ENCODE measurements at regions of chr4 and their contacts with region 1.

Region 1: DNA sequence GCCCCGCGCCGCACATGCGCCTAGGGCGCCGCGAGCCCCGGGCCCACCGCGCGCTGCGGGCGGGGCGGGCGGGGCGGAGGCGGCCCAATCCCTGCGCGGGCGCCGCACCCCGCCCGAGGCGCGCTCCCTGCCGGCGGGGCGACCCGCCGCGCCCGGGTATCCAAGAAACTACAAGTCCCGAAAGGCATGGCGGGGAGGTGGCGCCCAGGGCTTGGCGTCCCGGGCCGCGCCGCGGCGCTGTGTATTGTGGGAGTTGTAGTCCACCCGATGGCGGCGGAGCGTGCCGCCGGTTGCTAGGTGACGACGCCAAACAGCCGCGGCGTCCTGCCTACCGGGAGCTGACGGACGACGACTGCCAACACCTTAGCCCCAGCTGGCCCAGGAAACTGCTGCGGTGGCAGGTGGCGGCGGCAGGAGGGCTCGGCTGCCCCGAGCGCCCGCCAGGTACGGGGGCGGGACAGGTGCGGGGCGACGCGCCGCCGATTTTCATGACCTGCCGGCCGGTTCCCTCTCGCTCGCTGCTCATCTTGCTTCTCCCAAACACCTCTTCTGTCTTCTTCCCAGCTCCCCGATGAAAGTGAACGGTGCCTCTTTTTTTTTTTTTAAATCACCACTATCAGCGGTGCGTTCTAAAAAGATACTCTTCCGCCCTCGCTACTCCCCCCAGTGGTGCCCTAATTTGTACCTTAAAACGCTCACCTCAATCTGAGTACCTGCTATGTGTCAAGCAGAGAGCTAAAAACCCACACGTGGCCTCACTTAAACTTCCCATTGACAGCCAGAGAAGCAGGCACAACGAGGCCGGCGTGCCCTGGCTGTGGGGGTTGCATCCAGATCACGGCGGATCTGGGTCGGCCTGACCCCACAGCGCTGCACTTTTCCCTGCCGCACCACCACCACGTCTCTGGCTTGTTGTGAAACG is at the start of gene CFAP99:
- DNase-seq: peak; percentile 92
- H3K4me3 ChIP-seq: peak within 1 kb of the TSS; percentile 41 to 52 (median 47)
- H3K27ac ChIP-seq: no peak within 1 kb of the TSS
- H3K4me1 ChIP-seq: peaks cover 22% of the 10 kb centered on the region
- H3K27me3 ChIP-seq: peaks cover 39% of the 10 kb centered on the region
- CTCF ChIP-seq: peak in 1 of 2 donors; percentile 15
- total RNA-seq, gene CFAP99: not detected

Region 2: GRCh38 chr4:2792711-2793585 is 374.0 kb after region 1 on chr4 and contains the start of gene SH3BP2:
- CTCF ChIA-PET with region 1: interaction called, 15 read pairs
- dilution Hi-C with region 1: no loop called
- in situ Hi-C with region 1: no loop called
- intact Hi-C with region 1: no loop called
- DNase-seq: peak; percentile 21
- H3K4me3 ChIP-seq: peak within 1 kb of the TSS; percentile 15 to 42 (median 30)
- H3K27ac ChIP-seq: no peak within 1 kb of the TSS
- H3K4me1 ChIP-seq: peaks cover 21% of the 10 kb centered on the region
- H3K27me3 ChIP-seq: no peaks in the 10 kb centered on the region
- CTCF ChIP-seq: no peak
- total RNA-seq, gene SH3BP2: 14.4 to 26.7 TPM

Region 3: DNA sequence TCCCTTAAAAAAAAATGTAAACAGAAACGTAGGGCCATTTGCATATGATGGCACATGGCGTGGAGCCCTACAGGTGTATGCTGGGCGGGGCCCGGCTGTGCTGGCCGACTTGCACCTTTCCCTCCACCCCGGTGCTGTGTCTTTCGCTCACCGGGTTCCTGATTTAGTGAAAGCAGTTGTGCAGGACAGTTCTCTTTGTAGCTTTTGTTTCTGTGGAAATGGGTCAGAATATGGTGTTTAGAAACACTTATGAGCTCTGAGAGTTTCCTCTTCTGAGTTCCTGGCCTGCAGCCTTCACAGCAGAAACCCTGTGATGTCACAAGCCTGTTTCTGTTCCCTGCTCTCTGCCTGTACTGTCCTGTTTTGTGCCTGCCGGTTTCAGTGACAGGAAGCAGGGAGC is 807.6 kb after region 1 on chr4:
- CTCF ChIA-PET with region 1: no interaction called
- dilution Hi-C with region 1: no loop called
- in situ Hi-C with region 1: no loop called
- intact Hi-C with region 1: no loop called
- DNase-seq: no peak
- H3K4me3 ChIP-seq: no peak overlapping the region
- H3K27ac ChIP-seq: no peak overlapping the region
- H3K4me1 ChIP-seq: no peaks in the 10 kb centered on the region
- H3K27me3 ChIP-seq: no peaks in the 10 kb centered on the region
- CTCF ChIP-seq: no peak

Measured in mammary epithelial cell (primary cell).